ENCODE measurements at regions of chr1 and their contacts with region 1.

Region 1: DNA sequence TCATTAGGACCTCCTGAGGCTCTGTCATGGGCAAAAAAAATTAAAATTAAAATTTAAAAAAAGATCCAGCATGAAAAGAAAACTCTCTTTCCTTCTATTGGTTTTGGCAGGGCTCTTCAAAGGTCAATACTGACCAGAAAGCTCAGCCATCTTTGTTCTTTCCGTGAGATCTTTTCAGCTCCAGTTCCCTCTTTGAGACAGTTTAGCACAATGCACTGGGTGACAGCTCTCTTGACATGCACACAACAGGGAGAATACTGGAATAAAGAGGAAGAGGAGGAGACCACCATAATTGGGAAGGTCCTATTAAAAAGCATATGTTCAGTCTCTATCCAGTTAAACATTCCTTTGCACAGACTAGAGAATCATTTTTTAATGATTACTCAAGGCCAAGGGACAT is 6.3 kb downstream of the LIX1L start:
- DNase-seq: no peak
- H3K4me3 ChIP-seq: no peak overlapping the region
- H3K27ac ChIP-seq: no peak overlapping the region
- H3K4me1 ChIP-seq: peaks cover 0 to 87% (median 68%) of the 10 kb centered on the region in 4 donors
- H3K27me3 ChIP-seq: no peaks in the 10 kb centered on the region
- CTCF ChIP-seq: no peak
- EP300 ChIP-seq: no peak
- POLR2A ChIP-seq: no peak

Region 2: DNA sequence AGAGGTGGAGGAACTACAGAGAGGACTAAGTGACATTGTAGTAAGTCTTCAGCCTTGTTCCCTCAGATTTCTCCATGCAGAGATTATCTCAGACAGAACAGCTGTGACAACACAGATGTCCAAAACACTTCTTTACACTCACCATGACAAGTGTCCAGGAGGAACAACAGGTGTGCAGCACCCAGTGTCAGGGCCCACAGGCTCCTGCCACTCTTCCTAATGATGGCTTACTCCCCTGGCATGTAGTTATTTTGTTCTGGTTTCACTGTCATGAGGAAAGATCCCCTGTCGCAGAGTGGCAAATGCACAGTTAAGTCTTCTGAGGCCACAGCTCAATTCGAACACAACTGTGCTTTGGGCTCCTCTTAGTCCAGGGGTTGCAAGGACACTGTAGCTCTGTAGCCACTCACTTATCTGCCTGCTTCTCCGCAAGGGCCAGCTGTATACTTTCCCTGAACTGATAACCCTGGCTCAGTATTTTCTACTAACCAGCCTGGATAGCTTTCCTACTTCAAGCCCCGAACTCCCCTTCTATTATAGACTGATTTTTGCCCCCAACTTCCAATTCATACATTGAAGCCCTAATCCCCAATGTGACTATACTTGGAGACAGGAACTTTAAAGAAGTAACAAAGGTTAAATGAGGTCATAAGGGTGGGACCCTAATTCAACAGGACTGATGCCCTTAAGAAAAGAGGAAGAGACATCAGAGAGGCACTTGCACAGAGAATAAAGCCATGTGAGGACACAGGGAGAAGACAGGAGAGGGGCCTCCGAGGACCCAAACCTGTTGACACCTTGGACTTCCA is 255.5 kb before region 1 on chr1:
- intact Hi-C with region 1: no loop called
- DNase-seq: no peak
- H3K4me3 ChIP-seq: no peak overlapping the region
- H3K27ac ChIP-seq: no peak overlapping the region
- H3K4me1 ChIP-seq: peaks cover 0 to 4% (median 0%) of the 10 kb centered on the region in 4 donors
- H3K27me3 ChIP-seq: no peaks in the 10 kb centered on the region
- CTCF ChIP-seq: no peak
- EP300 ChIP-seq: no peak
- POLR2A ChIP-seq: no peak

Region 3: GRCh38 chr1:145901318-145902021 is 50.1 kb before region 1 on chr1:
- intact Hi-C with region 1: no loop called
- DNase-seq: no peak
- H3K4me3 ChIP-seq: no peak overlapping the region
- H3K27ac ChIP-seq: no peak overlapping the region
- H3K4me1 ChIP-seq: no peaks in the 10 kb centered on the region
- H3K27me3 ChIP-seq: no peaks in the 10 kb centered on the region
- CTCF ChIP-seq: no peak
- EP300 ChIP-seq: no peak
- POLR2A ChIP-seq: no peak

Region 4: DNA sequence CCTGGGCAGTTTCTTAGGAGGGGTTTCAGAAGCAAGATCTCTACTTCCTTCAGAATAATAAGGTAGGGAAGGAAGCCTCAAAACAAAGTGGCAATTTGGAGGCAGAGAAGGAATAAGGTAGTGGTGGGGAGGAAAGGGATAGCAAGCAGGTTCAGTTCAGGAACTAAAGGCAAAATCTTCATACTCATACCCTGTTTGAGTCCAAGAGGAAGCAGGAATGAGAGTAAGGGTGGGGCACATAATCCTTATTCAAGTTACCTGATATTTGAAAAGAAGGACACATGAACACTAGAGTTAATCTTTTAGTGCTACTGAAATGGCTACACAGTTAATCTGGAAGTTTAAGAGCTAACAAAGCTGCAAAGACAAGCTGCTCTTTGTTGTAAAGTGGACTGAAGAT is 15.8 kb before region 1 on chr1:
- intact Hi-C with region 1: loop called (anchors 2 kb)
- DNase-seq: no peak
- H3K4me3 ChIP-seq: no peak overlapping the region
- H3K27ac ChIP-seq: no peak overlapping the region
- H3K4me1 ChIP-seq: no peaks in the 10 kb centered on the region
- H3K27me3 ChIP-seq: no peaks in the 10 kb centered on the region
- CTCF ChIP-seq: no peak
- EP300 ChIP-seq: no peak
- POLR2A ChIP-seq: no peak

Measured in sigmoid colon (tissue), 7 donors.